Left cardiac atrium (tissue), 4 donors: ENCODE measurements at regions of chr14 and their contacts with region 1.

Region 1: GRCh38 chr14:31926123-31926522 is 151.0 kb upstream of the ARHGAP5 start:
- DNase-seq: no peak
- ATAC-seq: peak in 1 of 2 donors; percentile 16

Region 2: DNA sequence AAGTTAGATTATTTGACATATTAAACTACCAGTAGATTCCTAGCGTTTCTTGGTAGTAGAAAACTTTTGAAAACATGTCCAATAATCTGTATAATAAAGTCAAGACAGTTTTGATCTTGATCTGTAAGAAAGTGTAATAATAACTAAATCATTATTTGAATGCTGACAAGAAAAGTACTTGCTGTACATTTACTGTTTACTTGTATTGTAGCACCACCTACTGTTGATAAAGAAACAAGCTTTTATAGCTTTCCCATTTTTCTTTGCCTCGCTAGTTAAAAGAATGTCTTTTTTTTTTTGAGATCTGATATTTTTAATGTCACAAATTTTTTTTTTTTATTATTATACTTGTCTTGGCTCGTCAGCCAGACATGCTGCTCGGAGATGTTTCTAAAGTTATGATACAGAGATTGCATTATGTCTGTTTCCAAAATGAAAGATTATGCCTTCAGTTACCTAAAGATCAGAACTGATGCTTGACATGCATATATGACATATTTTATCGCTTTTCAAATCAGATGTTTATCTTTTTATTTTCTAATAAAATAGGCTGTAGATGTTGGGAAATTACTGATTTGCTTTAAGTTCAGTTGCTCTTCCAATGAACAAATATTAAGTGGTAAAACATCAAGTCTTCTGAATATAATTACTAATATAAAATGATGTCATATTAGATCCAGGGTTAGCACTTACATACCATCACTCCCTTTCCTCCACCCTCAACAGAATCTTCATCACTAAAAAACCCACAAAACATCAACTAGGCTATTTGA is 543.5 kb after region 1 on chr14:
- intact Hi-C with region 1: loop called in 1 of 2 experiments (anchors 10 kb)
- DNase-seq: no peak
- ATAC-seq: peak in 1 of 2 donors; percentile 59